B cell (primary cell): ENCODE measurements at regions of chr2 and their contacts with region 1.

Region 1: GRCh38 chr2:233068762-233069418 is 8.7 kb downstream of the INPP5D start:
- DNase-seq: no peak
- ATAC-seq: peak; percentile 44
- H3K4me3 ChIP-seq: peak overlapping the region in 2 of 5 experiments; percentile 25 to 47
- H3K4me3 Mint-ChIP-seq: peak overlapping the region; percentile 82
- H3K27ac ChIP-seq: peak overlapping the region; percentile 42 to 75
- H3K27ac Mint-ChIP-seq: peak overlapping the region; percentile 79
- H3K4me1 ChIP-seq: peaks cover 77 to 86% of the 10 kb centered on the region in 2 donors
- H3K4me1 Mint-ChIP-seq: peaks cover 70% of the 10 kb centered on the region
- H3K27me3 ChIP-seq: no peaks in the 10 kb centered on the region
- H3K27me3 Mint-ChIP-seq: no peaks in the 10 kb centered on the region
- CTCF ChIP-seq: no peak

Region 2: GRCh38 chr2:233084488-233084887 is 15.6 kb after region 1 on chr2:
- CTCF ChIA-PET with region 1: interaction called, 5 read pairs
- POLR2A ChIA-PET with region 1: interaction called, 25 read pairs
- intact Hi-C with region 1: no loop called
- DNase-seq: peak; percentile 53
- ATAC-seq: peak; percentile 19
- H3K4me3 ChIP-seq: peak overlapping the region; percentile 2 to 48 (median 17)
- H3K4me3 Mint-ChIP-seq: peak overlapping the region; percentile 78
- H3K27ac ChIP-seq: peak overlapping the region; percentile 88
- H3K27ac Mint-ChIP-seq: peak overlapping the region; percentile 94
- H3K4me1 ChIP-seq: peaks cover 91 to 100% of the 10 kb centered on the region in 2 donors
- H3K4me1 Mint-ChIP-seq: peaks cover 95% of the 10 kb centered on the region
- H3K27me3 ChIP-seq: no peaks in the 10 kb centered on the region
- H3K27me3 Mint-ChIP-seq: no peaks in the 10 kb centered on the region
- CTCF ChIP-seq: no peak